HEK293T (cell line): ENCODE measurements at regions of chr2 and their contacts with region 1.

Region 1: DNA sequence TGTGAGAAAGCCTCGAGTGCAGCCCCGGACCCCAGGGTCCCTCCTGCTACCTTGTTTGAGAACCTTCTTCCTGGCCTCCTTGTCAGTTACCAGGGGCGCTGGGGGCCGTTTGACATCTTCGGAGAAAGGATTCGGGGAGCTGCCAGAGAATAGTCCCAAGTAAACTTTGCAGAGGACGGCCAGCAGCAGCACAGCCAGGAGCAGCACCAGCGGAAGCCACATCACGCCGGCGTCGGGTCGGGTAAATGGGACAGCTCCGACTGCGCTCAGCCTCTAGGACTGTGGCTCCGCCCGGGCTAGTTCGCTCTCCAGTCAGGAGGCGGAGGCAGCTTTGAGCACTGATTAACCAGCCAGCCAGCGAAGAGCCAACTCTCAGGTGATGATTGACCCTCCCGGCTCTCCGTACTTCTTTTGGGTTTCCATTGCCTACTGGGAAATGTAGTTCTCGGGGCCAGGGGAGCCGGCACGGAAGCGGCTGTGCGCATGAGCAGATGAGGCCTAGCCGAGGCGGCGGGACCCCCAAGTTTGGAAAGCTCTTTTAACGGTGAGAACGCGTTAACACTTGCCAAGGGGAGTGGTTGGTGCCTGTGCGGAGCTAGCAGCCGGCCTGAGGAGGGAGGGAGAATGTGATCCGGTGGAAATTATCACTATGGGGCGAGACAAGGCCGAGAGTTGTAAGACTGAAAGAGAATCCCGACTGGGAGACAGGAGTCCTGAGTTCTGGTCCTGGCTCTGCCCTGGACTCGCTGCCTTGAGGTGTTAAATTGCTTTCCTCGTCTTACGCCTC is at the starts of genes ELMOD3 and RETSAT:
- DNase-seq: peak; percentile 97

Region 2: GRCh38 chr2:85327822-85328617 is 26.5 kb before region 1 on chr2 and contains the start of gene TGOLN2:
- CTCF ChIA-PET with region 1: no interaction called
- POLR2A ChIA-PET with region 1: interaction called, 19 read pairs
- DNase-seq: peak; percentile 97

Region 3: DNA sequence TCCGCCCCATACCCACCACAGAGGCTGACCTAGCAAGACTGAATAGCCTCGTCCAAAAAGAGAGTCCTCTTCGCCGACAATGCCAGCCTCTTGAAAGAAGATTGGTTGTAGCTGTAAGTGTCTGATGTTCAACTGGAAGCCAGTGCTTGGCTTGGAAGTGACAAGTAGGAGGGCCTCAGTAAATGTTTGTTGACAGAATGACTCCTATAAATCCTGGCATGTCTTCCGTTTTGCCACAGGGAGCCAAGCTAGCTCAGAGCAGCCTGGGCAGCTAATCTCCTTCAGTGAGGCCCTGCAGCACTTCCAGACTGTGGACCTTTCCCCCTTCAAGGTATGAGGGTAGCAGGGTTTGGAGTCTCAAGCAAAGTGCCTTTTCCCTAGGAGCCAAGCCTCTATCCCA is 15.0 kb after region 1 on chr2:
- CTCF ChIA-PET with region 1: no interaction called
- POLR2A ChIA-PET with region 1: interaction called, 23 read pairs
- DNase-seq: no peak